CD8-positive, alpha-beta memory T cell (primary cell): ENCODE measurements at regions of chr16 and their contacts with region 1.

Region 1: DNA sequence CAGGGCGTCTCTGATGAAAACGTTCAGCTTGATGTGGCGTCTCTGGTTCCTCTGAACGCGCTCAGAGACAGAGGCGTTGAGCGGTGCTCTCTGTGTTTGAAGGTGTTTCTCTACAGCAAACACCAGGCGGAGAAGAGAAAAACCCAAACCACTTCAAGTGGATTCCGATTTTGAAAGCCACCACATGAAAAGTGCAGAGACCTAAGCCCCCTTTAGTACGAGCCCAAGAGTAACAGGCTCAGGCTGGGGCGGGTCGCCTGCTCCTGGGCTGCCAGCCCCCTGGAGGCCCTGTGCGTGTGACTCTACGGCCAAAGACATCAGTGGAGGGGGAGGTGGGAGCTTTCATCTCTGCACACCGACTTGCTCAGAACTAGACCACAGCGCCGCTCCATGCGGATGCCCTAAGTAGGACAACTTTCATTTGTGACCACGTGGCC is 328.4 kb downstream of the MAF start:
- DNase-seq: peak; percentile 39 to 78 (median 65)
- H3K4me3 ChIP-seq: peak overlapping the region; percentile 66
- H3K4me3 Mint-ChIP-seq: peak overlapping the region; percentile 81 to 90 (median 84)
- H3K27ac ChIP-seq: peak overlapping the region; percentile 44
- H3K27ac Mint-ChIP-seq: peak overlapping the region; percentile 87 to 98 (median 96)
- H3K4me1 ChIP-seq: peaks cover 65% of the 10 kb centered on the region
- H3K4me1 Mint-ChIP-seq: peaks cover 66 to 84% (median 75%) of the 10 kb centered on the region in 3 donors
- H3K27me3 ChIP-seq: no peaks in the 10 kb centered on the region
- H3K27me3 Mint-ChIP-seq: no peaks in the 10 kb centered on the region

Region 2: GRCh38 chr16:79286646-79287423 is 14.7 kb after region 1 on chr16:
- CTCF ChIA-PET with region 1: interaction called, 12 read pairs
- POLR2A ChIA-PET with region 1: interaction called, 4 read pairs
- DNase-seq: peak in 2 of 5 donors; percentile 26 to 58
- H3K4me3 ChIP-seq: peak overlapping the region; percentile 46
- H3K4me3 Mint-ChIP-seq: peak overlapping the region; percentile 65 to 91 (median 77)
- H3K27ac ChIP-seq: no peak overlapping the region
- H3K27ac Mint-ChIP-seq: peak overlapping the region; percentile 25 to 98 (median 70)
- H3K4me1 ChIP-seq: peaks cover 49% of the 10 kb centered on the region
- H3K4me1 Mint-ChIP-seq: peaks cover 48 to 60% (median 58%) of the 10 kb centered on the region in 3 donors
- H3K27me3 ChIP-seq: no peaks in the 10 kb centered on the region
- H3K27me3 Mint-ChIP-seq: no peaks in the 10 kb centered on the region

Region 3: GRCh38 chr16:79307214-79307613 is 35.1 kb after region 1 on chr16:
- CTCF ChIA-PET with region 1: no interaction called
- POLR2A ChIA-PET with region 1: no interaction called
- DNase-seq: no peak
- H3K4me3 ChIP-seq: no peak overlapping the region
- H3K4me3 Mint-ChIP-seq: no peak overlapping the region
- H3K27ac ChIP-seq: no peak overlapping the region
- H3K27ac Mint-ChIP-seq: no peak overlapping the region
- H3K4me1 ChIP-seq: no peaks in the 10 kb centered on the region
- H3K4me1 Mint-ChIP-seq: peaks cover 0 to 13% (median 9%) of the 10 kb centered on the region in 3 donors
- H3K27me3 ChIP-seq: no peaks in the 10 kb centered on the region
- H3K27me3 Mint-ChIP-seq: no peaks in the 10 kb centered on the region